Lower leg skin (tissue), 4 donors: ENCODE measurements at regions of chr5 and their contacts with region 1.

Region 1: GRCh38 chr5:97694091-97694490 is 511.0 kb upstream of the RIOK2 start:
- DNase-seq: no peak
- H3K4me3 ChIP-seq: no peak overlapping the region
- CTCF ChIP-seq: no peak
- POLR2A ChIP-seq: no peak

Region 2: DNA sequence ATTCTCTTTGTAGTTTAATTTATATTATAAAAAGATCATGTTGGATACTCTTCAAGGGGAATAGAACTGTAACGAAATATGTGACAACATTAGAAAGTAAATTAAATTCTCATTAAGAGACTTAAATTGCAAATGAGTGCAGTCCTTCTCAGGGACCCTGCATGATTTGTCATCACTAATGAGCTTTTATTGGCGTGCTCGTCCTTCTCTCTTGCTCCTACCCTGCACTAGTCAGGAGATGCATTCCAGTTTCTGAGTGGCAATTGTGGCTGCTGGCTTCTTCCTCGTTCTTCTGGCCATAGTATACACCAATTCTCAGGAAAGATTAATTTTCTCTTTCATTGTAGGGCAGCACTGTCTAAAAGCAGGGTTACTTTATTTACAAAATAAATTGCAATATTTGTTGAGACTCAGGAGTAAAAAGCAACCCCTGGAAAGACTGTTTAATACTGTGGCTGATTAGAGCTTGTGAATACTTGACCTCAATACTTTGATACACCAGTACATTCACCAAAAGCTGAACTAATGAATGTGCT is 1611.0 kb after region 1 on chr5:
- intact Hi-C with region 1: loop called (anchors 5 kb)
- DNase-seq: no peak
- H3K4me3 ChIP-seq: no peak overlapping the region
- CTCF ChIP-seq: no peak
- POLR2A ChIP-seq: no peak